ENCODE measurements at regions of chr16 and their contacts with region 1.

Region 1: GRCh38 chr16:10521681-10522274 is 58.6 kb downstream of the EMP2 start:
- DNase-seq: peak; percentile 78
- H3K4me3 Mint-ChIP-seq: no peak overlapping the region
- H3K27ac Mint-ChIP-seq: no peak overlapping the region
- H3K4me1 Mint-ChIP-seq: peaks cover 12% of the 10 kb centered on the region
- H3K27me3 Mint-ChIP-seq: no peaks in the 10 kb centered on the region
- CTCF ChIP-seq: peak; percentile 80

Region 2: GRCh38 chr16:10579965-10580882 is 58.4 kb after region 1 on chr16 and contains the start of gene EMP2:
- CTCF ChIA-PET with region 1: no interaction called
- intact Hi-C with region 1: loop called (anchors 10 kb)
- DNase-seq: peak; percentile 93
- H3K4me3 Mint-ChIP-seq: peak within 1 kb of the TSS; percentile 83
- H3K27ac Mint-ChIP-seq: peak within 1 kb of the TSS; percentile 56
- H3K4me1 Mint-ChIP-seq: peaks cover 41% of the 10 kb centered on the region
- H3K27me3 Mint-ChIP-seq: peaks cover 14% of the 10 kb centered on the region
- CTCF ChIP-seq: peak; percentile 71
- total RNA-seq, gene EMP2: 65.9 and 73.9 TPM in 2 replicates

Region 3: DNA sequence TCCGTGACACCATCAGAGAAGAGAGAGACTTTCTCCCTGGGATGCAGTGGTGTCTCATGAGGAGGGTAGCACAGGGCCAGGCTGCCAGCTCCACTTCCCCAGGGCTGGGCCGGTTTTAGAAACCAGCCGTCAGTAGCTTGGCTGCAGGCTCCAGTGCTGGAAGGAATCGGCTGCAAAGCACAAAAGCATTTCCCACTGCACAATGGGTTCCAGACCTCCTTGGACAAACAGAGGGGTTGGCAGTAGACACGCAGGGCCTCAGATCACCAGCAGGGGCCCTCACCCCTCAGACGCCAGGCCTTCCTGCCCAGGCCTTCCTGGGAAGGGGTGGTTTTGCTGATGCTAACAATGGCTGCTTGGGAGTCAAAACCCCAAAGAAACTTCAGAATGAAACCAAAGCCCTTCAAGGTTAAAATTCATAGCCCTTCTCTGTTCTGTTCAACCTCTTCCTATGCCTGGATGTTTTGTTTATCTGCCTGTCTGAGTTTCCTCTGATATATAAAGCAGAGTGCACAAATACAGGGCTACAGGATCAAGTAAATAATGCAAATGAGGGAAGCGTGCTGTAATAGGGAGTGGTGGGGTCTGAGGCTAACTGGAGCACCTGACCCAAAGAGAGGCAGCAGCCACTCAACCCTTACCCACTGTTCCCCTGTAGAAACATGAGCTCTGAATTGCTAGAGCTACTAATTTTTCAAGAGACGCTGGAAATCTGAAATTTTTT is 146.7 kb after region 1 on chr16:
- CTCF ChIA-PET with region 1: no interaction called
- intact Hi-C with region 1: loop called (anchors 5 kb)
- DNase-seq: peak; percentile 70
- H3K4me3 Mint-ChIP-seq: no peak overlapping the region
- H3K27ac Mint-ChIP-seq: no peak overlapping the region
- H3K4me1 Mint-ChIP-seq: no peaks in the 10 kb centered on the region
- H3K27me3 Mint-ChIP-seq: peaks cover 39% of the 10 kb centered on the region
- CTCF ChIP-seq: peak; percentile 69

Region 4: DNA sequence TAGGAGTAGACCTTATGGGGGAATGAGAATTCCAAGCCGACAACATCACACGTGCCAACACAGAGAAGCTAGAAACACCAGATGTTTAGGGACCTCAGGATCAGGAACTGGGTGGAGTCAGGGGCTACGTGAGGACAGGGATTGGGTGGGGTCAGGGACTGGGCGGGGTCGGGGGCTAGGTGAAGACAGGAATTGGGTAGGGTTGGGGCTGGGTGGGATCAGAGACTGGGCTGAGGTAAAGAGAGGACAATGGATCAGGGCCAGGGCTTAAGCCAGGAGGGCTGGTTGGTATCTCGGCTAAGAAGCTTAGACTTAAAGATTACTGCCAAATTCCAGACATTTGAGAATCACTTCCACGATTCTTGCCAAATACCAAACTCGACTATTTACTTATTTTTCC is 161.4 kb after region 1 on chr16:
- CTCF ChIA-PET with region 1: no interaction called
- intact Hi-C with region 1: no loop called
- DNase-seq: no peak
- H3K4me3 Mint-ChIP-seq: no peak overlapping the region
- H3K27ac Mint-ChIP-seq: no peak overlapping the region
- H3K4me1 Mint-ChIP-seq: peaks cover 4% of the 10 kb centered on the region
- H3K27me3 Mint-ChIP-seq: peaks cover 31% of the 10 kb centered on the region
- CTCF ChIP-seq: no peak

Region 5: DNA sequence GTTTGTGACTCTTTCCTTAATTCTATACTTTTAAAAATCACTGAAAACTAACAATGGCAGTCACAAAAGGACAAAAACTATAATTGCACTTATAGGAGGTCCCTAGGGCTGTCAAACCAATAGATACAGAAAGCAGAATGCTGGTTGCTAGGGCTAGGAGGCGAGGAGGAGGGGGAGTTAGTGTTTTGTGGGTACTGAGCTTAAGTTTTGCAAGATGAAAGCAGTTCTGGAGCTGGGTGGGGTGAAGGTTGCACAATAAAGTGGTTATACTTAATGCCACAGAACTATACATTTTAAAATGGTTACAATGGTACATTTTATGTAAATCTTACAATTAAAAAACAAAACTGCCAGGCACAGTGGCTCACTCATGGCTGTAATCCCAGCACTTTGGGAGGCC is 249.1 kb after region 1 on chr16:
- CTCF ChIA-PET with region 1: interaction called, 10 read pairs
- intact Hi-C with region 1: no loop called
- DNase-seq: no peak
- H3K4me3 Mint-ChIP-seq: no peak overlapping the region
- H3K27ac Mint-ChIP-seq: no peak overlapping the region
- H3K4me1 Mint-ChIP-seq: peaks cover 13% of the 10 kb centered on the region
- H3K27me3 Mint-ChIP-seq: no peaks in the 10 kb centered on the region
- CTCF ChIP-seq: no peak